ENCODE measurements at regions of chr16 and their contacts with region 1.

Region 1: DNA sequence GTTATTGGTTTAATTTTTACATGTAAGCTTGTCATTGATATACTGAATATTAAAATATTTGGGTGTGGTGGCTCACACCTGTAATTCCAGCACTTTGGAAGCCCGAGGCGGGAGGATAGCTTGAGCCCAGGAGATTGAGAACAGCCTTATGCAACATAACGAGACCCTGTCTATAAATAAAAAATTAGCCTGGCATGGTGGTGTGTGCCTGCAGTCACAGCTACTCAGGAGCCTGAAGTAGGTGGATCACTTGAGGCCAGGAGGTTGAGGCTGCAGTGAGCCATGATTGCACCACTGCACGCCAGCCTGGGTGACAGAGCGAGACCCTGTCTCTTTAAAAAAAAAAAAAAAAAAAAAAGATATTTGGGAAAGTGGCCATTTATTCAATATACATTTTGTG is 32.3 kb downstream of the NFAT5 start:
- DNase-seq: no peak
- H3K4me3 Mint-ChIP-seq: no peak overlapping the region
- H3K27ac Mint-ChIP-seq: no peak overlapping the region
- H3K4me1 Mint-ChIP-seq: peaks cover 44% of the 10 kb centered on the region
- H3K27me3 Mint-ChIP-seq: no peaks in the 10 kb centered on the region

Region 2: DNA sequence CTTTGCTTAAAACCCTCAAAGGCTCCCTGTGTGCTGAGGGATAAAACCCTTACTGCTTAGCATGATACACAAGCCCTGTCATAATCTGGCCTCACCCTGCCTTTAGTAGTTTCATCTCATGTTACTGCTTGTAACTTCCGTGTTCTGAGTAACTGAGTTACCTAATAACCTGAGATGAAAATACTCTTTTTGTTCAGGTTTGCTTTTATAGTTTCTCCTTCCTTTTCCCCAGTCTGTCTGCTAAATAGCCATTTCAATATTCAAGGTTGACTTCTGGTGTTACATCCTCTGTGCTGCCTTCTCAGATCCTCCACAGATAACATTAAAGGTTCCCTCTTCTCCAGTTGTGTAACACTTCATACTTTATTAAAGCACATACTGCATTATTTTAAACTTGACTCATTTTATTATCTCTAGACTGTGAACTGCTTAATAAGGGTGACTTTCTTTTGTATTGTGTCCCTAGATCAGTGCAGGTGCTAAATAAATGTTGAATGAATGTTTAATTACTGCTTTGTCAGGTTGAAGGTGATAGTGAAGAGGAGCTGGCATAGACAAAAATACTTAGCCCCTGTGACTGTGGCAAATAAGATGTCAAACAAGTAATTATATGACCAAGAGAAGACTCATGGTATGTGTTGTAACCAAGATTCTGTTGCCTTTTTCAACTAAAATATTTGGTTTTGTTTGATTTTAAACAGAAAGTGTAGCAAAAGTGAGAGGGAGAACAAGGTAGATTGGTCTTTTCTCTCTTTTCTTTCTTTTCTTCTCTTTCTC is 15.5 kb after region 1 on chr16:
- CTCF ChIA-PET with region 1: interaction called, 5 read pairs
- intact Hi-C with region 1: loop called (anchors 2 kb)
- DNase-seq: peak; percentile 30
- H3K4me3 Mint-ChIP-seq: no peak overlapping the region
- H3K27ac Mint-ChIP-seq: peak overlapping the region; percentile 28
- H3K4me1 Mint-ChIP-seq: peaks cover 48% of the 10 kb centered on the region
- H3K27me3 Mint-ChIP-seq: no peaks in the 10 kb centered on the region

Region 3: GRCh38 chr16:69660166-69660565 is 62.1 kb after region 1 on chr16:
- CTCF ChIA-PET with region 1: no interaction called
- intact Hi-C with region 1: no loop called
- DNase-seq: no peak
- H3K4me3 Mint-ChIP-seq: no peak overlapping the region
- H3K27ac Mint-ChIP-seq: no peak overlapping the region
- H3K4me1 Mint-ChIP-seq: no peaks in the 10 kb centered on the region
- H3K27me3 Mint-ChIP-seq: no peaks in the 10 kb centered on the region